ENCODE measurements at regions of chr22 and their contacts with region 1.

Region 1: DNA sequence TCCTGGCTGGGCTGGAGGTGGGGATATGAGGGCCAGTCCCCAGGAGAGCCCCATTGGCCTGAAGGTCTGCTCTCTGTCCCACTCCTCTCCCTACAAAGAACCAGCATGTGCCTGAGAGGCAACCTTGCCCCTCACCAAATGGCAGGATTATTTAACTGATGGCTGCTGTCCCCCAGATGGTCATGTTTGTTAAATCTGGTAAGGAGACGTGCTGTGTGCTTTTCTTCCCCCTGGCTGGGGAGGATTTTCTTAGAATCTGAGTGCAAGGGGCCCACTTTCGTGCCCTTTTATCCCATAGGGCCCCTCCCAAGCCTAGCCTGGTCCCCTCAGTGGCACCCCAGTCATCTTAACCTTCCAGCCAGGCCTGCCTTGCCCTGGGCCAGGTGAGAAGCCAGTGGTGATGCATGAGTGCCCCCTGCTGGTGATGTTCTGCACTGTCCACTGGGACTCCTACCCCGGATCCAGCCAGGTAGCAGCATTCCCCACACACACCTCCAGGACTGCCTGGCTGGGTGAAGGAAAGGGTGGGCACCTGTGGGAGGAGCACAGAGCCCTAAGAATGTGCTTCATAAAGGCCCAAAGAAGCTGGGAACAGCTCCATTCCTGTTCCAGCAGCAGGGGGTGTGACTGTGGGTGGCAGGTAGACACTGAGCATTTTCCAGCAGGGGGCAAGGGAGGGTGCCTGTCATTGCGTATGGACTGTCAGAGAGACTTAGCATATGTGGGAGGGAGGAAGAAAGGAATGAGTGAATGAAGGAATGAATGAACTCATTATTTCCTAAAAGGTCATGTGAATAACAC is 28.9 kb downstream of the MFNG start:
- DNase-seq: peak; percentile 85
- H3K4me3 ChIP-seq: no peak overlapping the region; a peak in 1 of 4 replicates
- H3K27ac ChIP-seq: no peak overlapping the region
- H3K4me1 ChIP-seq: peaks cover 8 to 16% of the 10 kb centered on the region in 2 experiments; a peak in 2 of 4 replicates
- H3K27me3 ChIP-seq: no peaks in the 10 kb centered on the region
- CTCF ChIP-seq: peak; percentile 96
- EP300 ChIP-seq: no peak
- RAD21 ChIP-seq: peak; percentile 98

Region 2: GRCh38 chr22:37249986-37250385 is 207.3 kb before region 1 on chr22:
- CTCF ChIA-PET with region 1: no interaction called
- POLR2A ChIA-PET with region 1: no interaction called
- DNase-seq: no peak
- H3K4me3 ChIP-seq: no peak overlapping the region
- H3K27ac ChIP-seq: no peak overlapping the region
- H3K4me1 ChIP-seq: peaks cover 2 to 12% of the 10 kb centered on the region in 2 experiments; a peak in 3 of 4 replicates
- H3K27me3 ChIP-seq: no peaks in the 10 kb centered on the region
- CTCF ChIP-seq: no peak
- EP300 ChIP-seq: no peak
- RAD21 ChIP-seq: no peak

Region 3: DNA sequence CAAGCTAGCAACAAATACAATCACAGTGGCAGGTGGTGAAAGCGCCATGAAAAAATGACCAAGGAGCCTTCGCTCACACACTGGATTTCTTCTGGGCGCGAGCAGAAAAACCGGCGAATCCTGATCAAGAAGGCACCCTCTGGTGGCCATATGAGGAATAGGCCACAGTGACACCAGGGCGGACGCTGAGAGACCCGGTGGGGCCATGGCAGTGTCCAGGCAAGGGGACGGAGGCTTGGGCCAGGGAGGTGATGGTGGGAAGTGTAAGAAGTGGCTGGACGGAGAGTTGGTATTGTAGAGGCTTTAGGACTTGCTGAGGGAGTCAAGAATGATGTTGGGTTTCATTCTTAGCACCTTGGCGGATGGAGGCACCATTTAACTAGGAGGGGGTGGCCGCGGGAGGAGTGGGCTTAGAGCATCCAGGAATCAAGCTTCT is 196.4 kb before region 1 on chr22:
- CTCF ChIA-PET with region 1: interaction called, 11 read pairs
- POLR2A ChIA-PET with region 1: no interaction called
- DNase-seq: peak; percentile 84
- H3K4me3 ChIP-seq: peak overlapping the region in 1 of 2 experiments; percentile 16; a peak in 2 of 4 replicates
- H3K27ac ChIP-seq: no peak overlapping the region
- H3K4me1 ChIP-seq: peaks cover 2 to 3% of the 10 kb centered on the region in 2 experiments; a peak in 1 of 4 replicates
- H3K27me3 ChIP-seq: no peaks in the 10 kb centered on the region
- CTCF ChIP-seq: peak; percentile 91
- EP300 ChIP-seq: no peak
- RAD21 ChIP-seq: peak; percentile 68

Region 4: DNA sequence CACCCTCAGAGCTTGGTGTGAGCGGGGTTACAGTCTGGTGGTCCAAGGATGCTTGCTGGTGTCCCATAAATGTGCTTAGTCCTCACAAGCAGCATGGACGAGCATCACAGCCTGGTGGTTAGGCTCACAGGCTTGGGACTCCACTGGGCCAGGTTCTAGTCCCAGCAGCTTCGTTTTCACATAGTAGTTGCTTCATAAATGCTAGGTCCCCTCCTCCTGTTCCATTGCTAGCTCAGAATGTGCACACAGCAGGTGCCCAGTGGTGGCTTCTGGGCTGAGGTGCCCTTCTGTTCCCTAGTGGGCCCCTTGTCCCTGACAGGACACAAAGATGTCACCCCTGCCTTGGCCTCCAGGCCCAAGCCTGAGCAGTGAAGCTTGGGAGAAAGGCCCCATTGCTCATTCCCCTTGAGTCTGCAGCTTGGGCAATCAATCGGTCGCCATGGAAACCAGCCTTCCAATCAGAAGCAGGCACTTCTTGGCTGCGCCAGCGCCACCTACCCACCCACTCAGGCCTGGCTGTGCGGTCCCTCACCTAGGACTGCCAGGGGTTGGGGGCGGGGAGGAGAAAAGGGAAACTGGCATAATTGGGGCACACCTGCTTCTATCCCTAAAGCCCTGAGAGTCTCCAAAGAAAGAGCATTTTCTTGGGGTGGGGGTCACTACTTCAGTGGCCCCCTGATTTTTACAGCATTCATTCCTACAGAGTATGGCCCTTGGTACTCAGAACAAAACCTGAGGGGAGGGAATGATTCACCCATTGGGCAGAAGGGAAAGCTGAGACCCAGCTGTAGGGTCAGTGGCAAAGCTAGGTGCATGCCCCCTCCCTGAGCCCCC is 126.9 kb before region 1 on chr22:
- CTCF ChIA-PET with region 1: interaction called, 24 read pairs
- POLR2A ChIA-PET with region 1: no interaction called
- DNase-seq: peak; percentile 86
- H3K4me3 ChIP-seq: no peak overlapping the region
- H3K27ac ChIP-seq: no peak overlapping the region
- H3K4me1 ChIP-seq: peaks cover 13 to 26% of the 10 kb centered on the region in 2 experiments; a peak in 3 of 4 replicates
- H3K27me3 ChIP-seq: no peaks in the 10 kb centered on the region
- CTCF ChIP-seq: peak; percentile 30; the same call in 1 of the 2 replicates
- EP300 ChIP-seq: no peak
- RAD21 ChIP-seq: no peak

Region 5: DNA sequence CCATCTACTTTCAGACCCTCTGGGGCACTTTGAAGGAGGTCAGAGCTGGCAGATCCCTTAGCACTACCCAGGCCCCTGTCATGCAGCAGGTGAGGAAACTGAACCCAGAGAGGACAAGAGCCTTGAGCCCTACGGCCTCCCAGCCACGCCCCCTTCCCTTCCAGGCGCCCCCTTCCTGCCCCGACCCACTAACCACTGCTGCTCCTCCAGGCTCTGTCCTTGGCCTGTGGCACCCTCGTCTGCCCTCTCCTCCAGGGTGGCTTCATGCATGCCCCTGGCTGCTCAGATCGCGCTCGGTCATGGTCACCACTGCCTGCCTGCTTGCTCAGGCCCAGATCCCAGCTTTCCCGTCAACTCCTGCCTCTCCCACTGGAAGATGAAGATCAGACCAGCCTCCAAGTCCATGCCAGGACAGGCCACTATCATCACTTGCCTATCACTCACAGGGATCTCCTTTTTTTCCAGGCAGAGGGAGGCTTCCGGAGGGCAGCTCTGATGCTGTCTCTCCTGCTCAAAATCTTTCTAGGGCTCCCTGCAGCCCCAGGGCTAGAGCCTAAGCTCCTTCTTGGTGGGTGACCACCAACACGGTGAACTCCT is 60.7 kb before region 1 on chr22:
- CTCF ChIA-PET with region 1: no interaction called
- POLR2A ChIA-PET with region 1: no interaction called
- DNase-seq: peak; percentile 77
- H3K4me3 ChIP-seq: no peak overlapping the region
- H3K27ac ChIP-seq: no peak overlapping the region
- H3K4me1 ChIP-seq: peaks cover 0 to 19% of the 10 kb centered on the region in 2 experiments; a peak in 1 of 4 replicates
- H3K27me3 ChIP-seq: no peaks in the 10 kb centered on the region
- CTCF ChIP-seq: no peak
- EP300 ChIP-seq: no peak
- RAD21 ChIP-seq: no peak

Region 6: GRCh38 chr22:37416827-37417226 is 40.5 kb before region 1 on chr22:
- CTCF ChIA-PET with region 1: no interaction called
- POLR2A ChIA-PET with region 1: no interaction called
- DNase-seq: peak; percentile 66
- H3K4me3 ChIP-seq: no peak overlapping the region
- H3K27ac ChIP-seq: no peak overlapping the region
- H3K4me1 ChIP-seq: peaks cover 0 to 4% of the 10 kb centered on the region in 2 experiments; a peak in 1 of 4 replicates
- H3K27me3 ChIP-seq: peaks cover 5% of the 10 kb centered on the region; the same call in 1 of the 2 replicates
- CTCF ChIP-seq: no peak
- EP300 ChIP-seq: no peak
- RAD21 ChIP-seq: no peak

Region 7: GRCh38 chr22:37442537-37442936 is 14.8 kb before region 1 on chr22:
- CTCF ChIA-PET with region 1: interaction called, 23 read pairs
- POLR2A ChIA-PET with region 1: no interaction called
- DNase-seq: no peak
- H3K4me3 ChIP-seq: no peak overlapping the region
- H3K27ac ChIP-seq: no peak overlapping the region
- H3K4me1 ChIP-seq: no peaks in the 10 kb centered on the region
- H3K27me3 ChIP-seq: no peaks in the 10 kb centered on the region
- CTCF ChIP-seq: no peak
- EP300 ChIP-seq: no peak
- RAD21 ChIP-seq: no peak

Region 8: DNA sequence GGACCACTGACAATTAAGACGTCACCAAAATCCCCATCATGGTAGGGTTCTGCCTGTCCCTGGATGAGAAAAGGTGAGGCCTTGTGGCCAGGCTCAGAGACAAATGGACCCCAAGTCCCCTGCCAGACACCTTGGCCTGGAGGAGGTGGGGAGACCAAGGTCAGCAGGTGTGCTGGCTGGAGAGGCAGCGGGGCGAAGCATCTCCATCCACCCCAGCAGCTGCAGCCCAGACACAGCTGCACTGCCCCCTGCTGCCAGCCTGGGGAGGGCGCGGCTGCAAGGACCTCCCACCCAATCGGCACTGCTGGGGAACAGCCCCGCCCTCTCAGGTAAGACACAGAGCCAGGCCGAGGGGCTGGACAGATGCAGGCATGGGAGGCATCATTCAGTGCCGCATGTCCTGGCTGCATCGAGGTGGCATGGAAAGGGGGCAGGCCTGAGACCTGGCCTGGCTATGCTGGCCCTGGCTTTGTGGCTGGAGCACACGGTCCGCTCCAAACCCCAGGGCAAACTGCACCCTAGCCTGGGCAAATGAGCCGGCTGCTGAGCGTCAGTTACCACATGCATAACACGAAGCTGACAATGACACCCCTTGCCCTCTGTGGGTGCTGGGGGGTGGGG is 41.1 kb after region 1 on chr22:
- CTCF ChIA-PET with region 1: interaction called, 18 read pairs
- POLR2A ChIA-PET with region 1: no interaction called
- DNase-seq: peak; percentile 90
- H3K4me3 ChIP-seq: no peak overlapping the region
- H3K27ac ChIP-seq: no peak overlapping the region; a peak in 1 of 4 replicates
- H3K4me1 ChIP-seq: peaks cover 16 to 53% of the 10 kb centered on the region in 2 experiments
- H3K27me3 ChIP-seq: no peaks in the 10 kb centered on the region
- CTCF ChIP-seq: peak; percentile 40
- EP300 ChIP-seq: no peak
- RAD21 ChIP-seq: peak; percentile 54

Measured in SK-N-SH (cell line).